IMR-90 (cell line): ENCODE measurements at regions of chr12 and their contacts with region 1.

Region 1: DNA sequence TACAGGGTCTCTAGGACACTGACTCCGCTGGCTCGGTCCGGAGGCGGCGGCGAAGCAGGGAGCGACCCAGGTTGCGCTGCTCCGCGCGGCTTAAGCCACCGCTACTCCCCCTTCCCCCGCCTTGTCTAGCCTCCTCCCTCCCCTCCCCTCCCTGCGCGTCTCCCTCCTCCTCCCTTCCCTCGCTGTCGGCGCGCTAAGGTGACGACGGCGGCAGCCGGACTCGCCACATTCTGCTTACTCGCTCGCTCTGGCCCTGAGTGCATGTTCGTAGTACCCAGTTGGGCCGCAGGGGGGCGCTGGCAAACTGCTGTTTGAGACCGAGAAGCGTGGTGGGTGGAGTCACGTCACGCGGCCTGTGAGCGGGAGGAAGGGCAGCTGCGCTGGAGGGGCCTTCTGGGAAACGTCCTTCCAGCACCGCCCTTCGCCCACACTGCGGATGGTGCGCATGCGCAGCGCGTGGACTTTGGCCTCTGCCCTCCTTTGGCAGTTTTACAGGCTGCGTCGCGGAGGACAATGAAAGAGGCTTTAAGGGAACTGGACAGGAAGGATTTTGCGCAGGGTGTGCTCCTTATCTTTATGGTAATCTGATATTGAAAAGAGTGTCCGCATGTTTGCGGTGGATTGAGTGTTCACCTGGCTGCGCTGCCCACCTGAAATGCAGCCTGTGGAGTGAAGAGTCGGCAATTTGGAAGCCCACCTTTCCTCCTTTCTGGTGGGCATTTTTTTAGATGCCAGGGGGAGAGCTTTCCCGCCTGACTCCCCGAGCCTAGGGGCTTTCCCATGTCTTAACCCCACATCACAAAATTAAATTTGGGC is at the start of gene SCAF11:
- DNase-seq: peak; percentile 100
- ATAC-seq: peak; percentile 86
- H3K4me3 ChIP-seq: peak within 1 kb of the TSS; percentile 78
- H3K27ac ChIP-seq: peak within 1 kb of the TSS; percentile 87
- H3K4me1 ChIP-seq: peaks cover 3% of the 10 kb centered on the region; the same call in 1 of the 2 replicates
- H3K27me3 ChIP-seq: no peaks in the 10 kb centered on the region
- CTCF ChIP-seq: peak; percentile 99
- POLR2A ChIP-seq: peak; percentile 86
- RAD21 ChIP-seq: peak; percentile 84
- total RNA-seq, gene SCAF11: 70.4 and 90.3 TPM in 2 replicates

Region 2: GRCh38 chr12:45762185-45763110 is 228.2 kb before region 1 on chr12:
- CTCF ChIA-PET with region 1: interaction called, 3 read pairs
- POLR2A ChIA-PET with region 1: no interaction called
- dilution Hi-C with region 1: no loop called
- in situ Hi-C with region 1: no loop called
- intact Hi-C with region 1: loop called (anchors 2 kb)
- DNase-seq: peak; percentile 78
- ATAC-seq: peak; percentile 80
- H3K4me3 ChIP-seq: no peak overlapping the region
- H3K27ac ChIP-seq: no peak overlapping the region
- H3K4me1 ChIP-seq: no peaks in the 10 kb centered on the region
- H3K27me3 ChIP-seq: no peaks in the 10 kb centered on the region
- CTCF ChIP-seq: peak; percentile 83
- POLR2A ChIP-seq: no peak
- RAD21 ChIP-seq: peak; percentile 67

Region 3: DNA sequence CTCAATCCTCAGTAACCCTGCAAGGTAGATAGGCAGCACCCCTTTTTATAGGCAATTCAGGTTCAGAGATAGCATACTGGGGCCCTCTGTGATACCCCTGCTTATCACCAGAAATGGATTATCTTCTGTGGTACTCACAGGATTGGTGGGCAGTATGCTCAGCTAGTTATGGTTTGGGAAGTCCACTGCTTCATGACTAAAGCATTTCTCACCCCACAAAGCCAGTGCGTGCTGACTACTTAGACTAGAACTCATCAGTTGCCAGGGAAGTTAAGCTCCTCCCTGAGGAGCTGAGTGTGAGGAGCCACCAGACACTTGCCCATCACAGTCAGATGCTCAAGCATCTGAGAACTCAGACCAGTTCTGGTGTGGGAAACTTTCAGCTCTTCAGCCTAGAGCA is 76.6 kb before region 1 on chr12:
- CTCF ChIA-PET with region 1: no interaction called
- POLR2A ChIA-PET with region 1: no interaction called
- dilution Hi-C with region 1: no loop called
- in situ Hi-C with region 1: no loop called
- intact Hi-C with region 1: loop called (anchors 5 kb)
- DNase-seq: peak; percentile 91
- ATAC-seq: peak; percentile 90
- H3K4me3 ChIP-seq: no peak overlapping the region
- H3K27ac ChIP-seq: no peak overlapping the region
- H3K4me1 ChIP-seq: peaks cover 11% of the 10 kb centered on the region
- H3K27me3 ChIP-seq: no peaks in the 10 kb centered on the region
- CTCF ChIP-seq: no peak
- POLR2A ChIP-seq: no peak
- RAD21 ChIP-seq: no peak

Region 4: DNA sequence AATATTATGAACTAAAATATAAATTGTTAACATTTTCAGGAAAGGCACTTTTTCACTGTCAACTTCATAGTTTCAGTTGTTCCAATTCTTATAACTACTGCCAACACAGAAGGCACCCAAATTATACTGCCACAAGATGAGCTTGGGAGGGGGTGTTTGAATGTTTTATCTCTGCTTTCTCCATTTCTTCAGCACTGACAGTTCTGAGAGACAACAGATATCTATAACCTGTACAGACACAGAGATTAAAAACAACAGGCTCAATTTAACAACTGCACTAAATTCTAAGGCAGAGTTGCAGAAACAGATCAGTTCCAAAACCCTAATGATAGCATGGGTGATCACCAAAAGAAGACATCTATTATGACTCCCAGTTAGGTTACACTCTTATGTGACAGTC is 13.1 kb before region 1 on chr12:
- CTCF ChIA-PET with region 1: no interaction called
- POLR2A ChIA-PET with region 1: no interaction called
- dilution Hi-C with region 1: no loop called
- in situ Hi-C with region 1: no loop called
- intact Hi-C with region 1: loop called (anchors 1 kb)
- DNase-seq: no peak
- ATAC-seq: no peak
- H3K4me3 ChIP-seq: no peak overlapping the region
- H3K27ac ChIP-seq: no peak overlapping the region
- H3K4me1 ChIP-seq: peaks cover 8% of the 10 kb centered on the region
- H3K27me3 ChIP-seq: no peaks in the 10 kb centered on the region
- CTCF ChIP-seq: no peak
- POLR2A ChIP-seq: no peak
- RAD21 ChIP-seq: no peak

Region 5: GRCh38 chr12:46187023-46187422 is 196.3 kb after region 1 on chr12:
- CTCF ChIA-PET with region 1: no interaction called
- POLR2A ChIA-PET with region 1: no interaction called
- dilution Hi-C with region 1: no loop called
- in situ Hi-C with region 1: no loop called
- intact Hi-C with region 1: loop called (anchors 10 kb)
- DNase-seq: peak; percentile 93
- ATAC-seq: peak; percentile 72
- H3K4me3 ChIP-seq: no peak overlapping the region
- H3K27ac ChIP-seq: no peak overlapping the region
- H3K4me1 ChIP-seq: peaks cover 4% of the 10 kb centered on the region
- H3K27me3 ChIP-seq: no peaks in the 10 kb centered on the region
- CTCF ChIP-seq: no peak
- POLR2A ChIP-seq: no peak
- RAD21 ChIP-seq: no peak